Activated CD4-positive, alpha-beta T cell treated with anti-CD3 and anti-CD28 coated beads, Interleukin-2, amount 10 ng/mL, durations not matched to agents 24 days and 14 days (primary cell): ENCODE measurements at regions of chr1 and their contacts with region 1.

Region 1: GRCh38 chr1:159015440-159015909 is 5.8 kb downstream of the IFI16 start:
- DNase-seq: peak; percentile 91
- H3K4me3 Mint-ChIP-seq: peak overlapping the region; percentile 86
- H3K27ac Mint-ChIP-seq: peak overlapping the region; percentile 95
- H3K4me1 Mint-ChIP-seq: peaks cover 59% of the 10 kb centered on the region
- H3K27me3 Mint-ChIP-seq: no peaks in the 10 kb centered on the region

Region 2: DNA sequence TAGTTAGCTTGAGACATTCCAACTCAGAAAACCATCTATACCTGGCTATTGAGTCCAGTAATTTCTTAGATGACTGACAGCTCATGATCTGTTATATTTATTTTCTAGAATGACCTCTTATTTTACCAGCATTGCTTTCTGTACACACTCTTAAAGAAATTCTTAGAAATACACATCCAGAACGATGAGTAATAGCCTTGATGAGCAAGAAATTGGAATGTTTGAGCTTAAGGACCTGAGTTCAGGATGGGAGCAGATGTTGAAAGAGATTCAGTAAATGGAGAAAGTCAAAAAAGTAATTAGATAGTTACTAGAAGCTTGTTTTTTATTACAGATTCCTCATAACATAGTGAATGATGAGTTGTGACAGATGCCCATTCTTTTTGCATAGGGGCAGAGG is 72.4 kb before region 1 on chr1:
- intact Hi-C with region 1: no loop called
- DNase-seq: no peak
- H3K4me3 Mint-ChIP-seq: no peak overlapping the region
- H3K27ac Mint-ChIP-seq: no peak overlapping the region
- H3K4me1 Mint-ChIP-seq: peaks cover 3% of the 10 kb centered on the region
- H3K27me3 Mint-ChIP-seq: peaks cover 2% of the 10 kb centered on the region

Region 3: GRCh38 chr1:159040206-159040605 is 24.7 kb after region 1 on chr1:
- intact Hi-C with region 1: loop called (anchors 2 kb)
- DNase-seq: no peak
- H3K4me3 Mint-ChIP-seq: no peak overlapping the region
- H3K27ac Mint-ChIP-seq: no peak overlapping the region
- H3K4me1 Mint-ChIP-seq: peaks cover 47% of the 10 kb centered on the region
- H3K27me3 Mint-ChIP-seq: no peaks in the 10 kb centered on the region

Region 4: DNA sequence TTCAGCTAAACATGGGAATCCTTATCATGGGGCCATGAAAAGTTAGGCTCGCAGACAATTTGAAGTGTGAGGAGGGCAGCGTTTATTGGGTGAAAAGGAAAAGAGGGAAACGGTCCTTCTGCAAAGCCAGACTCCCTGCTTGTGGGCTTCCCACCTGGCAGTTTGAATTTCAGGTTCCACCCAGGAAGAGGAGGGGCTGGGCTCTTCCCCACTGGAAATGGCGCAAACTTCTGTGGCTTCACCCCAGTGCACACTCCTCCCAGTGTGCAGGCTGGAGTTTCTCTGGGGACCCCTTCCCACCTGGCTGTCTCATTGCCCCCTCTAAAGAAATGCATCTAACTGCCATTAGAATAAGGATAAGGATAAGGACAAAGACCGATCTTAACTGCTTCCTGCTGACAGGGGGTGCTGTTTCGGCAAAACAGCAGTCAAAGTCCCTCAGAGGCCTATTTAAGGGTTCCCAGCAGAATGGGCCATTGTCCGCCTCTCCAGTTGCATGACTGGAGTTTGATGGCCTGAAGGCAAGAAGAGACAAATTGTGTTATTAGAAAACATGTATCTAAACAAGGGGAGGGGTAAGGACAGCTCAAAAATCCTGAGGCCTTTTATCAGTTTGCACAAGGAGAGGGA is 40.7 kb after region 1 on chr1:
- intact Hi-C with region 1: no loop called
- DNase-seq: no peak
- H3K4me3 Mint-ChIP-seq: no peak overlapping the region
- H3K27ac Mint-ChIP-seq: peak overlapping the region; percentile 66
- H3K4me1 Mint-ChIP-seq: peaks cover 35% of the 10 kb centered on the region
- H3K27me3 Mint-ChIP-seq: no peaks in the 10 kb centered on the region

Region 5: GRCh38 chr1:159197561-159198557 is 182.4 kb after region 1 on chr1:
- intact Hi-C with region 1: no loop called
- DNase-seq: peak; percentile 82
- H3K4me3 Mint-ChIP-seq: no peak overlapping the region
- H3K27ac Mint-ChIP-seq: no peak overlapping the region
- H3K4me1 Mint-ChIP-seq: no peaks in the 10 kb centered on the region
- H3K27me3 Mint-ChIP-seq: peaks cover 19% of the 10 kb centered on the region